Activated naive CD4-positive, alpha-beta T cell treated with anti-CD3 and anti-CD28 coated beads, Interleukin-2, amount 10 ng/mL, durations not matched to agents 7 days and 5 days (primary cell): ENCODE measurements at regions of chr17 and their contacts with region 1.

Region 1: GRCh38 chr17:996554-997344 is at the start of gene TIMM22:
- DNase-seq: peak; percentile 95
- H3K4me3 Mint-ChIP-seq: peak within 1 kb of the TSS; percentile 98
- H3K27ac Mint-ChIP-seq: peak within 1 kb of the TSS; percentile 98
- H3K4me1 Mint-ChIP-seq: peaks cover 26% of the 10 kb centered on the region
- H3K27me3 Mint-ChIP-seq: peaks cover 6% of the 10 kb centered on the region

Region 2: GRCh38 chr17:794876-795275 is 201.9 kb before region 1 on chr17:
- CTCF ChIA-PET with region 1: interaction called, 15 read pairs
- DNase-seq: peak; percentile 66
- H3K4me3 Mint-ChIP-seq: no peak overlapping the region
- H3K27ac Mint-ChIP-seq: no peak overlapping the region
- H3K4me1 Mint-ChIP-seq: peaks cover 7% of the 10 kb centered on the region
- H3K27me3 Mint-ChIP-seq: no peaks in the 10 kb centered on the region